Endothelial cell of umbilical vein (primary cell): ENCODE measurements at regions of chr10 and their contacts with region 1.

Region 1: GRCh38 chr10:100872034-100872791 is 40.5 kb upstream of the SLF2 start:
- DNase-seq: peak; percentile 28
- H3K4me3 ChIP-seq: no peak overlapping the region
- H3K27ac ChIP-seq: no peak overlapping the region
- H3K4me1 ChIP-seq: no peaks in the 10 kb centered on the region
- H3K27me3 ChIP-seq: peaks cover 5 to 12% of the 10 kb centered on the region in 2 experiments
- CTCF ChIP-seq: peak; percentile 66 to 70
- POLR2A ChIP-seq: no peak

Region 2: GRCh38 chr10:100670828-100671479 is 201.3 kb before region 1 on chr10:
- CTCF ChIA-PET with region 1: interaction called, 6 read pairs
- POLR2A ChIA-PET with region 1: no interaction called
- dilution Hi-C with region 1: no loop called
- intact Hi-C with region 1: loop called (anchors 1 kb)
- DNase-seq: no peak
- H3K4me3 ChIP-seq: no peak overlapping the region
- H3K27ac ChIP-seq: no peak overlapping the region
- H3K4me1 ChIP-seq: no peaks in the 10 kb centered on the region
- H3K27me3 ChIP-seq: peaks cover 32 to 42% of the 10 kb centered on the region in 2 experiments
- CTCF ChIP-seq: peak; percentile 63 to 78
- POLR2A ChIP-seq: no peak

Region 3: DNA sequence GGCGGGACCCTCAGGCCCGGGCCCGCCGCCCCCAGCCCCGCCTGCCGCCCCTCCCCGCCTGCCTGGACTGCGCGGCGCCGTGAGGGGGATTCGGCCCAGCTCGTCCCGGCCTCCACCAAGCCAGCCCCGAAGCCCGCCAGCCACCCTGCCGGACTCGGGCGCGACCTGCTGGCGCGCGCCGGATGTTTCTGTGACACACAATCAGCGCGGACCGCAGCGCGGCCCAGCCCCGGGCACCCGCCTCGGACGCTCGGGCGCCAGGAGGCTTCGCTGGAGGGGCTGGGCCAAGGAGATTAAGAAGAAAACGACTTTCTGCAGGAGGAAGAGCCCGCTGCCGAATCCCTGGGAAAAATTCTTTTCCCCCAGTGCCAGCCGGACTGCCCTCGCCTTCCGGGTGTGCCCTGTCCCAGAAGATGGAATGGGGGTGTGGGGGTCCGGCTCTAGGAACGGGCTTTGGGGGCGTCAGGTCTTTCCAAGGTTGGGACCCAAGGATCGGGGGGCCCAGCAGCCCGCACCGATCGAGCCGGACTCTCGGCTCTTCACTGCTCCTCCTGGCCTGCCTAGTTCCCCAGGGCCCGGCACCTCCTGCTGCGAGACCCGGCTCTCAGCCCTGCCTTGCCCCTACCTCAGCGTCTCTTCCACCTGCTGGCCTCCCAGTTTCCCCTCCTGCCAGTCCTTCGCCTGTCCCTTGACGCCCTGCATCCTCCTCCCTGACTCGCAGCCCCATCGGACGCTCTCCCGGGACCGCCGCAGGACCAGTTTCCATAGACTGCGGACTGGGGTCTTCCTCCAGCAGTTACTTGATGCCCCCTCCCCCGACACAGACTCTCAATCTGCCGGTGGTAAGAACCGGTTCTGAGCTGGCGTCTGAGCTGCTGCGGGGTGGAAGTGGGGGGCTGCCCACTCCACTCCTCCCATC is 44.1 kb before region 1 on chr10:
- CTCF ChIA-PET with region 1: no interaction called
- POLR2A ChIA-PET with region 1: no interaction called
- dilution Hi-C with region 1: no loop called
- intact Hi-C with region 1: loop called (anchors 5 kb)
- DNase-seq: no peak
- H3K4me3 ChIP-seq: no peak overlapping the region
- H3K27ac ChIP-seq: no peak overlapping the region
- H3K4me1 ChIP-seq: peaks cover 4% of the 10 kb centered on the region
- H3K27me3 ChIP-seq: peaks cover 80 to 85% of the 10 kb centered on the region in 2 experiments
- CTCF ChIP-seq: no peak
- POLR2A ChIP-seq: no peak

Region 4: DNA sequence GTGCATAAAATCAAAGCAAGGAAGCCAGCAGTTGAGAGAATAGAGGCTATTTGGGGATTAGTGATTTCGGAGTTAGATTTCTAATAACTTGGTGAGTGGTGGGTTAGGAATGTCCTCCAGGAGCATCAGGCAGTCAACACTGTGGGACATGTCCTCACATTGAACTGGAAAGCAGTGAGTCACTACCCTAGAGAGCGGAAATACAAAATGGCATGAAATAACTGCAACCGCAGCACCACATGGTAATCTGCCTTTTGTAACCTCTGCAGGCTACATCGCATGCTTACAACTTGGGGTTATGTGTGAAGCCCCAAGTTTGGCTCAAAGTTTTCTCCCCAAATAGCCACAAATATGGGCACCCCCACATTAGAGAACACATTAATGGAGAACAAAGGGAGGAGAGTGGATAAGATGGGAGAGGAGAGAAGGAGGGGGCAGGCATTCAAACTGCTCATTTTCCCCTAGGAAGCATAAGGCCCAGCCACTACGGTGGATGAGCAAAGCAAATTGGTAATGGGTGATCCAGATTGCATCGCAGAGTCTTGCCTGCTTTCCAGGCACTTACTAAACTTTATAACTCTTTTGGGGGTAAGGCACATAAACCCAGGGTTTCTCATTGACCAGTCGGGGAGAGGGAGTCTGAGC is 18.6 kb after region 1 on chr10:
- CTCF ChIA-PET with region 1: interaction called, 13 read pairs
- POLR2A ChIA-PET with region 1: no interaction called
- dilution Hi-C with region 1: no loop called
- intact Hi-C with region 1: no loop called
- DNase-seq: peak; percentile 64
- H3K4me3 ChIP-seq: no peak overlapping the region
- H3K27ac ChIP-seq: peak overlapping the region; percentile 86
- H3K4me1 ChIP-seq: peaks cover 16% of the 10 kb centered on the region
- H3K27me3 ChIP-seq: peaks cover 15 to 30% of the 10 kb centered on the region in 2 experiments
- CTCF ChIP-seq: no peak
- POLR2A ChIP-seq: no peak